ENCODE measurements at regions of chr11 and their contacts with region 1.

Region 1: GRCh38 chr11:107017433-107018227 is 646 bp downstream of the GUCY1A2 start:
- DNase-seq: no peak
- ATAC-seq: peak; percentile 79
- H3K4me3 ChIP-seq: peak overlapping the region; percentile 42
- H3K27ac ChIP-seq: no peak overlapping the region
- H3K4me1 ChIP-seq: no peaks in the 10 kb centered on the region
- H3K27me3 ChIP-seq: peaks cover 23% of the 10 kb centered on the region
- CTCF ChIP-seq: peak; percentile 37; the same call in 1 of the 2 replicates
- POLR2A ChIP-seq: no peak
- RAD21 ChIP-seq: peak; percentile 47

Region 2: GRCh38 chr11:106231591-106231990 is 786.0 kb before region 1 on chr11:
- CTCF ChIA-PET with region 1: no interaction called
- POLR2A ChIA-PET with region 1: no interaction called
- dilution Hi-C with region 1: no loop called
- in situ Hi-C with region 1: no loop called
- intact Hi-C with region 1: loop called (anchors 5 kb)
- DNase-seq: peak; percentile 13
- ATAC-seq: peak; percentile 66
- H3K4me3 ChIP-seq: no peak overlapping the region
- H3K27ac ChIP-seq: no peak overlapping the region
- H3K4me1 ChIP-seq: no peaks in the 10 kb centered on the region
- H3K27me3 ChIP-seq: no peaks in the 10 kb centered on the region
- CTCF ChIP-seq: peak; percentile 36; the same call in 1 of the 2 replicates
- POLR2A ChIP-seq: no peak
- RAD21 ChIP-seq: peak; percentile 49

Region 3: GRCh38 chr11:106724293-106724892 is 293.2 kb before region 1 on chr11:
- CTCF ChIA-PET with region 1: no interaction called
- POLR2A ChIA-PET with region 1: no interaction called
- dilution Hi-C with region 1: no loop called
- in situ Hi-C with region 1: no loop called
- intact Hi-C with region 1: loop called (anchors 5 kb)
- DNase-seq: peak; percentile 6
- ATAC-seq: no peak
- H3K4me3 ChIP-seq: no peak overlapping the region
- H3K27ac ChIP-seq: no peak overlapping the region
- H3K4me1 ChIP-seq: no peaks in the 10 kb centered on the region
- H3K27me3 ChIP-seq: no peaks in the 10 kb centered on the region
- CTCF ChIP-seq: no peak
- POLR2A ChIP-seq: no peak
- RAD21 ChIP-seq: no peak

Region 4: GRCh38 chr11:107392611-107393010 is 375.0 kb after region 1 on chr11:
- CTCF ChIA-PET with region 1: no interaction called
- POLR2A ChIA-PET with region 1: no interaction called
- dilution Hi-C with region 1: no loop called
- in situ Hi-C with region 1: no loop called
- intact Hi-C with region 1: no loop called
- DNase-seq: no peak
- ATAC-seq: no peak
- H3K4me3 ChIP-seq: no peak overlapping the region
- H3K27ac ChIP-seq: no peak overlapping the region
- H3K4me1 ChIP-seq: no peaks in the 10 kb centered on the region
- H3K27me3 ChIP-seq: no peaks in the 10 kb centered on the region
- CTCF ChIP-seq: no peak
- POLR2A ChIP-seq: no peak
- RAD21 ChIP-seq: no peak